ENCODE measurements at regions of chr14 and their contacts with region 1.

Region 1: GRCh38 chr14:53306267-53306721 is 153.2 kb upstream of the DDHD1 start:
- DNase-seq: peak in 6 of 9 experiments; percentile 13 to 61 (median 36)
- ATAC-seq: peak; percentile 34
- H3K4me3 ChIP-seq: peak overlapping the region; percentile 1 to 17
- H3K4me3 Mint-ChIP-seq: peak overlapping the region; percentile 52
- H3K27ac ChIP-seq: no peak overlapping the region
- H3K27ac Mint-ChIP-seq: no peak overlapping the region
- H3K4me1 ChIP-seq: no peaks in the 10 kb centered on the region
- H3K4me1 Mint-ChIP-seq: peaks cover 4% of the 10 kb centered on the region
- H3K27me3 ChIP-seq: peaks cover 0 to 2% of the 10 kb centered on the region in 2 experiments
- H3K27me3 Mint-ChIP-seq: peaks cover 5% of the 10 kb centered on the region
- CTCF ChIP-seq: peak; percentile 62

Region 2: DNA sequence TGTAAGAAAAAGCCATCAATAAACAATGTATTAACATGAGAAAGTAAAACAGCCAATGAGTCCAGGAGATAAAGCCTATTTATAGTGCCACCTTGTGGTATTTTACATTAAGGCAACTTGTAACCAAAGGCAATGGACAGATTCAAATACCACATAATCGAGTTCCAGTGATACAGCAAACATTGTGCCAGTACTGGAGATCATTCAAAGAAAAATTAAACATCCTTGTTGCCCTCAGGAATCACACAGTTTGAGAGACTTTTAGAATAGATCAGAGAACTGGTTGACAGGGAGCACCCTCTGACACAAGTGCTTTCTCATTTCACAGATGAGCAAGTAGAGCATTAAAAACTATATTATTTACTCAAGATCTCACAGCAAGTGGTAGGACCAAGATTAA is 251.3 kb before region 1 on chr14:
- CTCF ChIA-PET with region 1: no interaction called
- POLR2A ChIA-PET with region 1: no interaction called
- intact Hi-C with region 1: loop called (anchors 1 to 10 kb)
- DNase-seq: peak in 2 of 9 experiments; percentile 48 to 60
- ATAC-seq: peak; percentile 55
- H3K4me3 ChIP-seq: no peak overlapping the region
- H3K4me3 Mint-ChIP-seq: no peak overlapping the region
- H3K27ac ChIP-seq: no peak overlapping the region
- H3K27ac Mint-ChIP-seq: peak overlapping the region; percentile 34
- H3K4me1 ChIP-seq: no peaks in the 10 kb centered on the region
- H3K4me1 Mint-ChIP-seq: no peaks in the 10 kb centered on the region
- H3K27me3 ChIP-seq: no peaks in the 10 kb centered on the region
- H3K27me3 Mint-ChIP-seq: no peaks in the 10 kb centered on the region
- CTCF ChIP-seq: peak; percentile 82

Region 3: DNA sequence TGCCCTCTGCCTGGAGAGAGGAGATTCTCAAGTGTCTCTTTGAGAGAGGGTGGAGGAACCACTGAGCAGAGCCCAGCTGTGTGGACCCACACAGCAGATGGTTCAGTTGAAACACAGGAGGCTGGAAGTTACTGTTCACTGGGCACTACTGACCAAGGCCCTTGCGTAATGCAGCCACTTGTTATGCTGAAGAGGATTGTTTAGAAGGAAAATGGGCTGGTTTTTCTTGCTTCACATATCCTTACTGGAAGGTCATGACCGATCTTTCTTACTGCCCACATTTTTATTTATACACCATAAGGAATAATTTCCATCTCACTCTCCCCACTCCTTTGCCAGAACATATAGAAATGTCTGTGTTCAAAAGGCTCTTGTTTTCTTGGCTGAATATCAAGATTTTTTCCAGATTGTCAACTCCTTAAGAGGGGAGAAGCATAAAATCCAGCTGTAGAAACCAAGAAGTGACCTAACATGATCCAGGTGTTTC is 221.9 kb after region 1 on chr14:
- CTCF ChIA-PET with region 1: no interaction called
- POLR2A ChIA-PET with region 1: no interaction called
- intact Hi-C with region 1: no loop called
- DNase-seq: no peak
- ATAC-seq: no peak
- H3K4me3 ChIP-seq: no peak overlapping the region
- H3K4me3 Mint-ChIP-seq: no peak overlapping the region
- H3K27ac ChIP-seq: no peak overlapping the region
- H3K27ac Mint-ChIP-seq: no peak overlapping the region
- H3K4me1 ChIP-seq: no peaks in the 10 kb centered on the region
- H3K4me1 Mint-ChIP-seq: no peaks in the 10 kb centered on the region
- H3K27me3 ChIP-seq: no peaks in the 10 kb centered on the region
- H3K27me3 Mint-ChIP-seq: no peaks in the 10 kb centered on the region
- CTCF ChIP-seq: no peak

Measured in CD8-positive, alpha-beta T cell (primary cell).